ENCODE measurements at regions of chr3 and their contacts with region 1.

Region 1: GRCh38 chr3:32177702-32178198 is 60.7 kb upstream of the CMTM8 start:
- DNase-seq: no peak
- H3K4me3 ChIP-seq: no peak overlapping the region
- H3K27ac ChIP-seq: peak overlapping the region; percentile 16
- H3K4me1 ChIP-seq: peaks cover 10% of the 10 kb centered on the region
- H3K27me3 ChIP-seq: no peaks in the 10 kb centered on the region
- CTCF ChIP-seq: peak; percentile 81

Region 2: DNA sequence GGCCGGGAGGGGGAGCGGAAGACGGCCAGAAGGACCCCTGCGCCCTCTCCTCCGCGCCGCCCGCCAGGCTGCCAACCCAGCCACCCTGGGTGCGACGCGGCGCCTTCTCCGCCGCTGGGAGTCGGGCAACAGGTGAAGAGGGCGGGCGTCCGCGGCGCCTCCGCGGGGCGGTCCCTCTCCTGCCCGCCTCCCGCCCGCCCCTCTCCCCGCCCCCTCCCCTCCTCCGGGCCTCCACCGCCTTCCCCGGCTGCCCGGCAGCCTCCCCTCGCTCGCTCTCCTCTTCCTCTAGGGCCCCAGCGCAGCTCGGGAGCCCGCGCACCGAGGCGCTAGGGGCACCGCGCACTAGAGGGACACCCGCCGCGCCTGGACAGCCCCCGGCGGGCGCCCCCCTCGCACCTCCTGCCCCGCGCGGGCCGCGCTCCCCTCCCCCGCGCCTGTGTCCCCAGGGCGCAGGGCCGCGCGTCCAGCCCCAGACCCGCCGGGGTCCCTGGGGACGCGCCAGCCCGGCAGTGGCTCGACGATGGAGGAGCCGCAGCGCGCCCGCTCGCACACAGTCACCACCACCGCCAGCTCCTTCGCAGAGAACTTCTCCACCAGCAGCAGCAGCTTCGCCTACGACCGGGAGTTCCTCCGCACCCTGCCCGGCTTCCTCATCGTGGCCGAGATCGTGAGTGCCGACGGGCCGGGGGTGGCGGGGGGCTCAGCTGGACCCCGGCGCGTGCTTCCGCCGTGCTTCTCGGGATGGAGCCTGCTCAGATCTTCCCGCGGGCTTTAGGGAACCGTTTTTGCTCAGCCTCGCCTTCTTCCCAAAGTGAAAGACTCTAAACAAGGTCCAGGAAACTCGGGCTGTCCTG is 60.9 kb after region 1 on chr3 and contains the start of gene CMTM8:
- intact Hi-C with region 1: loop called (anchors 10 kb)
- DNase-seq: peak; percentile 43
- H3K4me3 ChIP-seq: peak within 1 kb of the TSS; percentile 88
- H3K27ac ChIP-seq: peak within 1 kb of the TSS; percentile 92
- H3K4me1 ChIP-seq: peaks cover 41% of the 10 kb centered on the region
- H3K27me3 ChIP-seq: no peaks in the 10 kb centered on the region
- CTCF ChIP-seq: no peak
- total RNA-seq, gene CMTM8: 5.7 TPM

Region 3: GRCh38 chr3:32296256-32297204 is 118.8 kb after region 1 on chr3:
- intact Hi-C with region 1: loop called (anchors 2 kb)
- DNase-seq: peak; percentile 55
- H3K4me3 ChIP-seq: no peak overlapping the region
- H3K27ac ChIP-seq: no peak overlapping the region
- H3K4me1 ChIP-seq: peaks cover 12% of the 10 kb centered on the region
- H3K27me3 ChIP-seq: no peaks in the 10 kb centered on the region
- CTCF ChIP-seq: peak; percentile 92

Region 4: DNA sequence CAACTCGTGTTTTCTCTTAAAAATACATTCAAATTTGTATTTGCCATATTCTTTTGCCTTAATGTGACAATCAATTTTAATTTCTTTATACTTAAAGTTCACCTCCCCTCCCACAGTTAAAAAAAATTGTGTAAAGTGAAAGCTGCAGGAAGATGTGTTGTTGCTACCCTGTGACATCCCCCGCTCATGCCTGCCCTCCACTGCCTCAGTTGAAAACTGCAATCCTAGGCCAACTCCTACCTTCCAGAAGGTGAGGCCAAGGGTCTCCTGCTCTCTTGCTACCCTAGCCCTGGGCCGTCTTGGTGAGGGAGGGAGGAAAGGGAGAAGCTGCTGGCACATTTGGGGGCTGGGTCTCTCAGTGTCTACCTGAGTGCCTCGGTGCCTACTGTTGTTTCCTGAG is 156.9 kb after region 1 on chr3:
- intact Hi-C with region 1: loop called (anchors 10 kb)
- DNase-seq: no peak
- H3K4me3 ChIP-seq: no peak overlapping the region
- H3K27ac ChIP-seq: no peak overlapping the region
- H3K4me1 ChIP-seq: peaks cover 11% of the 10 kb centered on the region
- H3K27me3 ChIP-seq: no peaks in the 10 kb centered on the region
- CTCF ChIP-seq: peak; percentile 30

Region 5: GRCh38 chr3:32467333-32468070 is 289.8 kb after region 1 on chr3:
- intact Hi-C with region 1: loop called (anchors 10 kb)
- DNase-seq: peak; percentile 66
- H3K4me3 ChIP-seq: peak overlapping the region; percentile 62
- H3K27ac ChIP-seq: peak overlapping the region; percentile 56
- H3K4me1 ChIP-seq: peaks cover 19% of the 10 kb centered on the region
- H3K27me3 ChIP-seq: no peaks in the 10 kb centered on the region
- CTCF ChIP-seq: peak; percentile 99